ENCODE measurements at regions of chr18 and their contacts with region 1.

Region 1: DNA sequence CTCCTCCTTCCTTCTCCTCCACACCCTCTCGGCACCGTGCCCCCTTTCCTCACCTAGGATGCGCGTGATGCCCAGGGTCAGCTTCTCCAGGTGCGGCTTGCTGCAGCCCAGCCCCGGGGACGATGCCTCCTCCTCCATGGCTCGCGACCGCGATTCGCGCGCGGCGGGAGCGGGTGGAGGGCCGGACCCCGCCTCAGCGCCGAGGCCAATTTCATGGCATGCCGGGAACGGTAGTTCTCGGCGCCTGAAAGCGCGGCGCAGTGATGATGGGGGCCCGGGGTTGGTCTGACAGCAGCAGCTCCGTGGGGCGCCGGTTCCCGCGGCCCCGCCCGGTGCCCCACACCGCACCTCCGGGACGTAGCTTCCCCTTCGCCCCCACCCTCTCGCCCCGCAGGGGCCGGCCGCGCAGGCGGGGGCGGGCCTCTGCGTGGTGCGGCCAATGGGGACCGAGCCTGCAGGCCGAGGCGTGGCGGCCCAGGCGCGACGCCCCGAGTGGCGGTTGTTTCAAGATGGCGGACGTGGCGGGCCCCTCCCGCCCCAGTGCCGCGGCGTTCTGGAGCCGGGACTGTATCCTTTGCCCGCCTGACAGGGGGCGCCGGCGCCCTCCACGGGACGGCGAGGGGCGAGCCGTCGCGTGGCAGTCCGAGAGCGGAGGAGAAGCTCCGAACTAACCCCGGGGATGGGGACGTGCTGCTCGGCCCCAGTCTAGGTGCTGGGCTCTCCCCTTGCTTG is at the starts of genes KIAA1328 and TPGS2:
- DNase-seq: peak; percentile 75 to 94 (median 85)
- ATAC-seq: peak; percentile 90
- H3K4me3 ChIP-seq: peak within 1 kb of the TSS; percentile 99
- H3K4me3 Mint-ChIP-seq: peak within 1 kb of the TSS; percentile 81
- H3K27ac ChIP-seq: peak within 1 kb of the TSS; percentile 70 to 71
- H3K27ac Mint-ChIP-seq: peak within 1 kb of the TSS; percentile 93
- H3K4me1 ChIP-seq: peaks cover 22% of the 10 kb centered on the region
- H3K4me1 Mint-ChIP-seq: peaks cover 42% of the 10 kb centered on the region
- H3K27me3 ChIP-seq: no peaks in the 10 kb centered on the region
- H3K27me3 Mint-ChIP-seq: no peaks in the 10 kb centered on the region
- CTCF ChIP-seq: peak; percentile 58
- total RNA-seq, gene KIAA1328: 6.9 to 7.0 TPM
- total RNA-seq, gene TPGS2: 14.5 to 16.4 TPM

Region 2: GRCh38 chr18:35267161-35267651 is 1561.6 kb before region 1 on chr18:
- CTCF ChIA-PET with region 1: no interaction called
- POLR2A ChIA-PET with region 1: no interaction called
- intact Hi-C with region 1: loop called in 1 of 2 experiments (anchors 10 kb)
- DNase-seq: peak; percentile 44 to 86 (median 74)
- ATAC-seq: peak; percentile 84
- H3K4me3 ChIP-seq: peak overlapping the region; percentile 77 to 84
- H3K4me3 Mint-ChIP-seq: peak overlapping the region; percentile 97
- H3K27ac ChIP-seq: peak overlapping the region; percentile 69 to 87
- H3K27ac Mint-ChIP-seq: peak overlapping the region; percentile 97
- H3K4me1 ChIP-seq: peaks cover 7% of the 10 kb centered on the region
- H3K4me1 Mint-ChIP-seq: peaks cover 26% of the 10 kb centered on the region
- H3K27me3 ChIP-seq: no peaks in the 10 kb centered on the region
- H3K27me3 Mint-ChIP-seq: no peaks in the 10 kb centered on the region
- CTCF ChIP-seq: no peak

Region 3: GRCh38 chr18:35972197-35973052 is 856.4 kb before region 1 on chr18 and contains the start of gene RMP24:
- CTCF ChIA-PET with region 1: no interaction called
- POLR2A ChIA-PET with region 1: interaction called, 9 read pairs
- intact Hi-C with region 1: loop called in 1 of 2 experiments (anchors 5 kb)
- DNase-seq: peak; percentile 88 to 97 (median 93)
- ATAC-seq: peak; percentile 84
- H3K4me3 ChIP-seq: peak within 1 kb of the TSS; percentile 60 to 89
- H3K4me3 Mint-ChIP-seq: peak within 1 kb of the TSS; percentile 94
- H3K27ac ChIP-seq: peak within 1 kb of the TSS; percentile 57 to 90
- H3K27ac Mint-ChIP-seq: peak within 1 kb of the TSS; percentile 98
- H3K4me1 ChIP-seq: peaks cover 35% of the 10 kb centered on the region
- H3K4me1 Mint-ChIP-seq: peaks cover 65% of the 10 kb centered on the region
- H3K27me3 ChIP-seq: no peaks in the 10 kb centered on the region
- H3K27me3 Mint-ChIP-seq: no peaks in the 10 kb centered on the region
- CTCF ChIP-seq: no peak

Region 4: GRCh38 chr18:36047521-36047920 is 781.3 kb before region 1 on chr18:
- CTCF ChIA-PET with region 1: no interaction called
- POLR2A ChIA-PET with region 1: no interaction called
- intact Hi-C with region 1: no loop called
- DNase-seq: no peak
- ATAC-seq: no peak
- H3K4me3 ChIP-seq: no peak overlapping the region
- H3K4me3 Mint-ChIP-seq: no peak overlapping the region
- H3K27ac ChIP-seq: no peak overlapping the region
- H3K27ac Mint-ChIP-seq: no peak overlapping the region
- H3K4me1 ChIP-seq: peaks cover 9% of the 10 kb centered on the region
- H3K4me1 Mint-ChIP-seq: peaks cover 62% of the 10 kb centered on the region
- H3K27me3 ChIP-seq: no peaks in the 10 kb centered on the region
- H3K27me3 Mint-ChIP-seq: no peaks in the 10 kb centered on the region
- CTCF ChIP-seq: no peak

Region 5: DNA sequence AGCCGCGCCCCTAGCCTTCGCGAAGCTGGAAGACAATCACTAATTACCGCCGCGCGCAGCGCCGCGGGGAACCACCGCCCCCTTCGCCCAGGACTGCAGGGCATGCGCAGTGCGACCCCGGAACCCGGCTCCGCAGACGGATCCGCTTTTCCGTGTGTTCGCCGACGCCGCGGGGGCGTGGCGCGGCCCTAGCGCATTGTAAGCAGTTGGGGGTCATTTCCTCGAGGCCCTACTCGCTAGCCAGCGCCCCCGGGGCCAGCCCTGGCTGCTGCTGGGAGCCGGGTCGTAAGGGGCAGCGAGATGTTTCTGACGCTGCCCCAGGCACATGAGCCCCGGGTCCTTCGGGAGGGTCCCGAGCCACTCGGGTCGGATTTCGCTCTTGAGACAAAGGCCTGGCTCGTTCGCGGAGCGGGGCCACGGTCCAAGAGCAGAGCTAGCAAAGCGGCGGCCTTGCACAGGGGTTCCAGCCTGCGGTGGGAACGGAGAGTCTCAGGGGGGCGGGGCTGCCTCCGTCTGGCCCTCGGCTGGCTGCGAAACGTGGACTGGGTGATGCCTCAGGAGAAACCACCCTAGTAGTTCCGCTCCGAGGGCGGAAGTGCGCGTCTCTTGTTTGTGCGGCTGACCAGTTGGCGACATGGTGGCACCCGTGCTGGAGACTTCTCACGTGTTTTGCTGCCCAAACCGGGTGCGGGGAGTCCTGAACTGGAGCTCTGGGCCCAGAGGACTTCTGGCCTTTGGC is 699.3 kb before region 1 on chr18 and contains the starts of genes ELP2 and SLC39A6:
- CTCF ChIA-PET with region 1: no interaction called
- POLR2A ChIA-PET with region 1: no interaction called
- intact Hi-C with region 1: loop called (anchors 1 to 5 kb)
- DNase-seq: peak; percentile 88 to 98 (median 96)
- ATAC-seq: peak; percentile 87
- H3K4me3 ChIP-seq: peak within 1 kb of the TSS; percentile 97 to 100
- H3K4me3 Mint-ChIP-seq: peak within 1 kb of the TSS; percentile 95
- H3K27ac ChIP-seq: peak within 1 kb of the TSS; percentile 94 to 98
- H3K27ac Mint-ChIP-seq: peak within 1 kb of the TSS; percentile 98
- H3K4me1 ChIP-seq: peaks cover 47% of the 10 kb centered on the region
- H3K4me1 Mint-ChIP-seq: peaks cover 68% of the 10 kb centered on the region
- H3K27me3 ChIP-seq: no peaks in the 10 kb centered on the region
- H3K27me3 Mint-ChIP-seq: no peaks in the 10 kb centered on the region
- CTCF ChIP-seq: no peak
- total RNA-seq, gene ELP2: 212 to 222 TPM
- total RNA-seq, gene SLC39A6: 12.3 to 14.4 TPM

Region 6: DNA sequence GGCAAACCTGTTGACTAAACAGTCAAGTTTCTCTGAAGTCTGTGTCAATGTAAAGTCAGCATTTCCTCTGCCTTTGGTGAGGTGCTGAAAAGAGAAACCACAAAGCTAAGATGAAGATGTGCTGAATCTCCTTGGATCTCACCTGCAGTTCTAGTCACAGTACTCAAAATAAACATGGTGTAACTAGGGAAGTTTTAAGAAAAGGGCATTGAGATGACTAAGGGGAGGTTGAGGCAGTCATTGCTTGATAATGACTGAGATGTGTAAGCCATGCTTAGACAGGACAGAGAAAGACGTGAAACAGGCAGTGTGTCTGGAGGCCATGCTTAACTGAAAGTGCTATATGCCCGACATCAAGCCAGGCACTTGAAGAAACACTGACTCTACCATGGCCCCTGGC is 1746.9 kb after region 1 on chr18:
- CTCF ChIA-PET with region 1: no interaction called
- POLR2A ChIA-PET with region 1: no interaction called
- intact Hi-C with region 1: loop called in 1 of 2 experiments (anchors 5 kb)
- DNase-seq: peak in 2 of 9 experiments; percentile 20 to 48
- ATAC-seq: peak; percentile 65
- H3K4me3 ChIP-seq: no peak overlapping the region
- H3K4me3 Mint-ChIP-seq: peak overlapping the region; percentile 53
- H3K27ac ChIP-seq: peak overlapping the region in 1 of 2 experiments; percentile 29
- H3K27ac Mint-ChIP-seq: peak overlapping the region; percentile 23
- H3K4me1 ChIP-seq: peaks cover 24% of the 10 kb centered on the region
- H3K4me1 Mint-ChIP-seq: peaks cover 31% of the 10 kb centered on the region
- H3K27me3 ChIP-seq: no peaks in the 10 kb centered on the region
- H3K27me3 Mint-ChIP-seq: no peaks in the 10 kb centered on the region
- CTCF ChIP-seq: no peak